ENCODE measurements at regions of chr6 and their contacts with region 1.

Region 1: DNA sequence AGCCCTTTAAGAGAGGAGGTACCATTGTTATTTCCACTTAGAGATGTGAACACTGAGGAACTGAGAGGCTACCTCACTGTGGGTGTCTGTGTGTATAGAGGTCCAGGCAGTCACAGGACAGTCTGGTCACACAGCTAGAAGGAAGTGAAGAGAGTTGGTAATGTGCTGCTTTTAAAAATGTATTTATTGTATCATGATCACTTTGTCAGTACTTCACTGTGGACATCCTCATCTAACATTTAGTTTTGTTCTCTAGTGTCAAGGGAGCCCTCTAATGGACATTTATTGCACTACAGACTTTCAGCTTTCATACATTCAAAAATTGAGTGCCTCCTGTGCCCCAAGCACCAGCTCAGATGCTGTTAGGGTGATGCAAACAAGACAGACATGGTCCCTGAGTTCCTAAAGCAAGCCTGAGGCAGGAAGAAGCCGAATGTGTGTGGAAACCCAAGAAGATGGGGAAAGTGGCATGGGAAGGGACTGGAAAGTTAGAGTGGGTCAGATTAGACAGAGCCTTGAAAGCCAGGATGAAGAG is 123.0 kb downstream of the SLC16A10 start:
- DNase-seq: peak in 1 of 2 experiments; percentile 9
- H3K4me3 ChIP-seq: no peak overlapping the region
- H3K27ac ChIP-seq: no peak overlapping the region
- H3K4me1 ChIP-seq: no peaks in the 10 kb centered on the region
- H3K27me3 ChIP-seq: no peaks in the 10 kb centered on the region
- CTCF ChIP-seq: peak; percentile 87

Region 2: DNA sequence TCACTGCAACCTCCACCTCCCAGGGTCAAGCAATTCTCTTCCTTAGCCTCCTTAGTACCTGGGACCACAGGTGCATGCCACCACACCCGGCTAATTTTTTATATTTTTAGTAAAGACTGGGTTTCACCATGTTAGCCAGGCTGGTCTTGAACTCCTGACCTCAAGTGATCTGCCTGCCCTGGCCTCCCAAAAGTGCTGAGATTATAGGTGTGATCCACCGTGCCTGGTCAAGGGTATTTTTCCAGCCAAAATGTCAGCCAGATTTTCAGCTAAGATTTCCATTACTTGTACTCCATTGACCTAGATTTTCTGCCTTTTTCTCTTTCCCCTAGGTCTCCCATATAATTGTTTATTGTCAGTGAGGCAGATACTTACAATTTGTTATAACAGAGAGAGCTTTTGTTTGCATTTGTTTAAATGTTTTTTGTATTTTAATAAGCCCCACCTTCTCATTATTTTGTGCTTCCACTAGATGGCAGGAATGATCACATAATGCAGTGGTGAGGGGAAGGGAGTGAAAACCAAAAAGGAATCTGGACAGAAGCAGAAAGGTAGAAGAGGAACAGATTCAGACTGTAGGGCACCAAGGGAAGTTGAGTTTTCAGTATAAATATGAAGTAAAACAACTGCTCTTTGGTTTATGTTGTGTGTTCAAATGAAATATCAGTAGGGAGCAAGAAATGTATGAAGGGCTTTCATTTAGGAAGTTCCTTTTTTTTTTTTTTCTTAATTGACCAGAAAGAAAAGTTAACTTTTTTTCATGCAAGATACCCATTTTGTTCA is 198.7 kb before region 1 on chr6:
- CTCF ChIA-PET with region 1: interaction called, 4 read pairs
- POLR2A ChIA-PET with region 1: no interaction called
- intact Hi-C with region 1: loop called (anchors 2 kb)
- DNase-seq: peak in 1 of 2 experiments; percentile 9
- H3K4me3 ChIP-seq: no peak overlapping the region
- H3K27ac ChIP-seq: no peak overlapping the region
- H3K4me1 ChIP-seq: no peaks in the 10 kb centered on the region
- H3K27me3 ChIP-seq: no peaks in the 10 kb centered on the region
- CTCF ChIP-seq: peak; percentile 80

Region 3: GRCh38 chr6:111057074-111057752 is 153.0 kb before region 1 on chr6:
- CTCF ChIA-PET with region 1: interaction called, 4 read pairs
- POLR2A ChIA-PET with region 1: no interaction called
- intact Hi-C with region 1: loop called (anchors 1 kb)
- DNase-seq: no peak
- H3K4me3 ChIP-seq: no peak overlapping the region
- H3K27ac ChIP-seq: no peak overlapping the region
- H3K4me1 ChIP-seq: no peaks in the 10 kb centered on the region
- H3K27me3 ChIP-seq: no peaks in the 10 kb centered on the region
- CTCF ChIP-seq: peak; percentile 86

Region 4: GRCh38 chr6:111256646-111257045 is 46.4 kb after region 1 on chr6:
- CTCF ChIA-PET with region 1: no interaction called
- POLR2A ChIA-PET with region 1: no interaction called
- intact Hi-C with region 1: no loop called
- DNase-seq: no peak
- H3K4me3 ChIP-seq: no peak overlapping the region
- H3K27ac ChIP-seq: no peak overlapping the region
- H3K4me1 ChIP-seq: peaks cover 18% of the 10 kb centered on the region
- H3K27me3 ChIP-seq: no peaks in the 10 kb centered on the region
- CTCF ChIP-seq: peak; percentile 48

Region 5: GRCh38 chr6:111342913-111343312 is 132.7 kb after region 1 on chr6:
- CTCF ChIA-PET with region 1: no interaction called
- POLR2A ChIA-PET with region 1: no interaction called
- intact Hi-C with region 1: no loop called
- DNase-seq: no peak
- H3K4me3 ChIP-seq: no peak overlapping the region
- H3K27ac ChIP-seq: no peak overlapping the region
- H3K4me1 ChIP-seq: no peaks in the 10 kb centered on the region
- H3K27me3 ChIP-seq: no peaks in the 10 kb centered on the region
- CTCF ChIP-seq: no peak

Measured in PC-9 (cell line).